MCF 10A (cell line): ENCODE measurements at regions of chr3 and their contacts with region 1.

Region 1: GRCh38 chr3:33717866-33718594 is at the start of gene CLASP2:
- DNase-seq: peak; percentile 82
- H3K4me3 Mint-ChIP-seq: no peak within 1 kb of the TSS
- H3K27ac Mint-ChIP-seq: no peak within 1 kb of the TSS
- H3K4me1 Mint-ChIP-seq: no peaks in the 10 kb centered on the region
- H3K27me3 Mint-ChIP-seq: no peaks in the 10 kb centered on the region
- CTCF ChIP-seq: no peak
- total RNA-seq, gene CLASP2: 57.2 and 58.9 TPM in 2 replicates

Region 2: GRCh38 chr3:33392703-33393125 is 325.3 kb before region 1 on chr3:
- CTCF ChIA-PET with region 1: no interaction called
- POLR2A ChIA-PET with region 1: no interaction called
- intact Hi-C with region 1: loop called (anchors 2 kb)
- DNase-seq: peak; percentile 93
- H3K4me3 Mint-ChIP-seq: no peak overlapping the region
- H3K27ac Mint-ChIP-seq: peak overlapping the region; percentile 13
- H3K4me1 Mint-ChIP-seq: peaks cover 14% of the 10 kb centered on the region
- H3K27me3 Mint-ChIP-seq: no peaks in the 10 kb centered on the region
- CTCF ChIP-seq: no peak

Region 3: GRCh38 chr3:33440323-33441232 is 277.5 kb before region 1 on chr3 and contains the start of gene UBP1:
- CTCF ChIA-PET with region 1: no interaction called
- POLR2A ChIA-PET with region 1: interaction called, 10 read pairs
- intact Hi-C with region 1: loop called (anchors 1 kb)
- DNase-seq: peak; percentile 100
- H3K4me3 Mint-ChIP-seq: peak within 1 kb of the TSS; percentile 99
- H3K27ac Mint-ChIP-seq: peak within 1 kb of the TSS; percentile 99
- H3K4me1 Mint-ChIP-seq: peaks cover 14% of the 10 kb centered on the region
- H3K27me3 Mint-ChIP-seq: no peaks in the 10 kb centered on the region
- CTCF ChIP-seq: no peak
- total RNA-seq, gene UBP1: 55.6 and 72.6 TPM in 2 replicates

Region 4: GRCh38 chr3:33636125-33636850 is 81.7 kb before region 1 on chr3:
- CTCF ChIA-PET with region 1: interaction called, 8 read pairs
- POLR2A ChIA-PET with region 1: interaction called, 10 read pairs
- intact Hi-C with region 1: loop called (anchors 1 kb)
- DNase-seq: peak; percentile 60
- H3K4me3 Mint-ChIP-seq: no peak overlapping the region
- H3K27ac Mint-ChIP-seq: peak overlapping the region; percentile 2
- H3K4me1 Mint-ChIP-seq: peaks cover 5% of the 10 kb centered on the region
- H3K27me3 Mint-ChIP-seq: no peaks in the 10 kb centered on the region
- CTCF ChIP-seq: peak; percentile 74

Region 5: GRCh38 chr3:33758864-33759263 is 40.8 kb after region 1 on chr3:
- CTCF ChIA-PET with region 1: no interaction called
- POLR2A ChIA-PET with region 1: interaction called, 10 read pairs
- intact Hi-C with region 1: no loop called
- DNase-seq: no peak
- H3K4me3 Mint-ChIP-seq: no peak overlapping the region
- H3K27ac Mint-ChIP-seq: no peak overlapping the region
- H3K4me1 Mint-ChIP-seq: peaks cover 8% of the 10 kb centered on the region
- H3K27me3 Mint-ChIP-seq: no peaks in the 10 kb centered on the region
- CTCF ChIP-seq: no peak

Region 6: GRCh38 chr3:33773637-33774036 is 55.6 kb after region 1 on chr3:
- CTCF ChIA-PET with region 1: interaction called, 12 read pairs
- POLR2A ChIA-PET with region 1: interaction called, 10 read pairs
- intact Hi-C with region 1: loop called (anchors 1 kb)
- DNase-seq: no peak
- H3K4me3 Mint-ChIP-seq: no peak overlapping the region
- H3K27ac Mint-ChIP-seq: no peak overlapping the region
- H3K4me1 Mint-ChIP-seq: no peaks in the 10 kb centered on the region
- H3K27me3 Mint-ChIP-seq: no peaks in the 10 kb centered on the region
- CTCF ChIP-seq: no peak

Region 7: DNA sequence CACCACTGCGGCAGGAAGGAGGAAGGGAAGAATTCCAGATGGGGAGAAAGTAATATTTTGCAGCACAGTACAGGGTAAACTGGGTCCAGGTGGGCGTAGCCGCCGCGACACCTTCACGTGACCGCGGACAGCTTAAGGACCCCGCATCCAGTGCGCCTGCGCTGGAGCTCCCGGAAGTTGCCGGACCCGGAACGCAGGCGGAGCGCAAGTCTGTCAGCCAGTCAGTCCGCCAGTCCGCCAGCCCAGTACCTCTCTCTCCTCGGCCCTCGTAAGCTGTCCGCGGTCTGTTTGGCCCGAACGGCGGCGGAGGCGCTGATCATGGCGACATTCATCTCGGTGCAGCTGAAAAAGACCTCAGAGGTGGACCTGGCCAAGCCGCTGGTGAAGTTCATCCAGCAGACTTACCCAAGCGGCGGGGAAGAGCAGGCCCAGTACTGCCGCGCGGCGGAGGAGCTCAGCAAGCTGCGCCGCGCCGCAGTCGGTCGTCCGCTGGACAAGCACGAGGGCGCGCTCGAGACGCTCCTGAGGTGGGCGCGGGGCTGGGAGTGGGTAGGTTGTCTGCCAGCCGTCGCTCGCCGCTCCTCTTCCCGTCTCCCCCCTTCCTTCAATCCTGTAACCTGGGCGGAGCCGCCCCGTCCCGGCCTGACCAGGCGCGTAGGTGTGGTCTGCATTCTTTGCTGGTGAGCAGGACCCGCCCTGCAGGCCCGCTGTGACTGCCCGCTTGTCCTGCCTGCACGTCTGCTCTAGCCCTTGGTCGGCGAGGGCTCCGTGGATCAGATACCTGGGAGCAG is 80.6 kb after region 1 on chr3 and contains the start of gene PDCD6IP:
- CTCF ChIA-PET with region 1: no interaction called
- POLR2A ChIA-PET with region 1: interaction called, 23 read pairs
- intact Hi-C with region 1: no loop called
- DNase-seq: peak; percentile 92
- H3K4me3 Mint-ChIP-seq: peak within 1 kb of the TSS; percentile 90
- H3K27ac Mint-ChIP-seq: peak within 1 kb of the TSS; percentile 93
- H3K4me1 Mint-ChIP-seq: peaks cover 41% of the 10 kb centered on the region
- H3K27me3 Mint-ChIP-seq: no peaks in the 10 kb centered on the region
- CTCF ChIP-seq: no peak
- total RNA-seq, gene PDCD6IP: 286 and 304 TPM in 2 replicates

Region 8: DNA sequence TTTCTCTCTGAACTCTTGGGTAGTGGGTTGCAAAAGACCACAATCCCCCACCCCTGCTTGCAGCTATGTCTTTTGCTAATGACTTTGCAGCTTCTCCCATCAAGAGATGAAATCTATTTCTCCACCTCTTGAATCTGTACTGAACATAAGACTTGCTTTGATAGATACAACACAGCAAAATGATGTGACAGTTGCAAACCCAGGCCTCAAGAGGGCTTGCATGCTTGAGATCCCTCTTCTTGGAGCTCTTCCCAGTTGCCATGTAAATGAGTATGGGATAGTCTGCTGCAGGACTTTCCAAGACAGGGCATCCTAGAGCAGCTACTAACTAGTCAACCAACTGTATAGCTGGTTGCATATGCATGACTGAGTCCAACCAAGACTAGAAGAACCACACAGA is 864.0 kb after region 1 on chr3:
- CTCF ChIA-PET with region 1: no interaction called
- POLR2A ChIA-PET with region 1: no interaction called
- intact Hi-C with region 1: no loop called
- DNase-seq: peak; percentile 7
- H3K4me3 Mint-ChIP-seq: no peak overlapping the region
- H3K27ac Mint-ChIP-seq: no peak overlapping the region
- H3K4me1 Mint-ChIP-seq: no peaks in the 10 kb centered on the region
- H3K27me3 Mint-ChIP-seq: peaks cover 17% of the 10 kb centered on the region
- CTCF ChIP-seq: no peak